Cardiac septum (tissue), 1 donor: ENCODE measurements at regions of chr17 and their contacts with region 1.

Region 1: GRCh38 chr17:39754161-39754951 is 16.6 kb downstream of the GRB7 start:
- DNase-seq: peak; percentile 97

Region 2: DNA sequence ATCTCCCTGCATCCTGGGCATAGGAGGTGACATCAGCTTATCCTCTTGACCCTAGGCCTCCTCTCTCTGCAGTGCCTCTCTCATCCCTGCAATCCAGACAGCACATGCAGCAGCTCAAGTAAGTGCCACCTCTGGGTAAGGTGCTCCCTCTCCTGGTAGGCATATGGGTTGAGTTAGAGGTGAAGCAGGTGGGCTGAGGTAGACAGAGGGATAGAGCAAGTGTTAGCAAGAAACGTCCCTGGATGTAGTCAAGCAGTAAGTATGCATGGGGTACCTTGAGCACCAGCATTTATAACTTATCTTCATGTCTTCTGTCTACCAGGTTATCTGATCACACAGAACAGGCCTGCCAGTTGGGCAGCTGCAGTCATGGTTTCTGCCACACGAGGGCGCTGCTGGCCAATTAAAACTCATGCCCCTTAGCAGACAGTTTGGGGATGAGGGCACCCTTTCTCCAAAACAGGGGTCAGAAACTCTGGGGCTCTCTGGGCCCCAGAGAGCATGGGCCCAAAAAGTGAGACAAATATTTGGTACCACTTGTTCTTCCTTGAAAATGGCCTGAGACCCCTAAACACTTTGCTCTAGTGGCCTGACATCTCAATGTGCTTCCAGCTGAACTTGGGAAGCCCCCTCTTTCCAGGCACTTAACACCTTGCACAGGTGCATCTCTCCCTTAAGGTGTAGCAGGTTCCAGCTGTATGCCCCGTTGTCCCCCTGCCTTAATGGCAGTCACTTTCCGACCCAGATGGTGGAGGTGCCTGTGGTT is 206.5 kb before region 1 on chr17:
- intact Hi-C with region 1: loop called (anchors 5 kb)
- DNase-seq: peak; percentile 83

Region 3: GRCh38 chr17:39636927-39637736 is 117.2 kb before region 1 on chr17 and contains the start of gene STARD3:
- intact Hi-C with region 1: loop called (anchors 5 kb)
- DNase-seq: peak; percentile 97
- total RNA-seq, gene STARD3: 21.9 TPM